Caco-2 (cell line): ENCODE measurements at regions of chr7 and their contacts with region 1.

Region 1: GRCh38 chr7:158407581-158408317 is 179.9 kb downstream of the PTPRN2 start:
- DNase-seq: peak in 1 of 2 experiments; percentile 53
- H3K4me3 ChIP-seq: no peak overlapping the region
- H3K4me3 Mint-ChIP-seq: no peak overlapping the region
- H3K27ac Mint-ChIP-seq: peak overlapping the region; percentile 66
- H3K4me1 ChIP-seq: no peaks in the 10 kb centered on the region
- H3K4me1 Mint-ChIP-seq: peaks cover 12% of the 10 kb centered on the region
- H3K27me3 ChIP-seq: no peaks in the 10 kb centered on the region
- H3K27me3 Mint-ChIP-seq: no peaks in the 10 kb centered on the region
- CTCF ChIP-seq: peak; percentile 51 to 63

Region 2: GRCh38 chr7:157432957-157433576 is 974.7 kb before region 1 on chr7:
- CTCF ChIA-PET with region 1: no interaction called
- POLR2A ChIA-PET with region 1: no interaction called
- intact Hi-C with region 1: loop called (anchors 1 kb)
- DNase-seq: peak; percentile 35 to 44
- H3K4me3 ChIP-seq: no peak overlapping the region
- H3K4me3 Mint-ChIP-seq: peak overlapping the region; percentile 50
- H3K27ac Mint-ChIP-seq: no peak overlapping the region
- H3K4me1 ChIP-seq: no peaks in the 10 kb centered on the region
- H3K4me1 Mint-ChIP-seq: peaks cover 14% of the 10 kb centered on the region
- H3K27me3 ChIP-seq: no peaks in the 10 kb centered on the region
- H3K27me3 Mint-ChIP-seq: no peaks in the 10 kb centered on the region
- CTCF ChIP-seq: peak; percentile 53 to 72

Region 3: GRCh38 chr7:158377800-158378623 is 29.7 kb before region 1 on chr7:
- CTCF ChIA-PET with region 1: no interaction called
- POLR2A ChIA-PET with region 1: no interaction called
- intact Hi-C with region 1: no loop called
- DNase-seq: no peak
- H3K4me3 ChIP-seq: no peak overlapping the region
- H3K4me3 Mint-ChIP-seq: no peak overlapping the region
- H3K27ac Mint-ChIP-seq: no peak overlapping the region
- H3K4me1 ChIP-seq: no peaks in the 10 kb centered on the region
- H3K4me1 Mint-ChIP-seq: no peaks in the 10 kb centered on the region
- H3K27me3 ChIP-seq: no peaks in the 10 kb centered on the region
- H3K27me3 Mint-ChIP-seq: no peaks in the 10 kb centered on the region
- CTCF ChIP-seq: no peak

Region 4: GRCh38 chr7:158422887-158423560 is 15.3 kb after region 1 on chr7:
- CTCF ChIA-PET with region 1: no interaction called
- POLR2A ChIA-PET with region 1: no interaction called
- intact Hi-C with region 1: no loop called
- DNase-seq: peak in 1 of 2 experiments; percentile 22
- H3K4me3 ChIP-seq: no peak overlapping the region
- H3K4me3 Mint-ChIP-seq: no peak overlapping the region
- H3K27ac Mint-ChIP-seq: no peak overlapping the region
- H3K4me1 ChIP-seq: no peaks in the 10 kb centered on the region
- H3K4me1 Mint-ChIP-seq: no peaks in the 10 kb centered on the region
- H3K27me3 ChIP-seq: no peaks in the 10 kb centered on the region
- H3K27me3 Mint-ChIP-seq: no peaks in the 10 kb centered on the region
- CTCF ChIP-seq: no peak

Region 5: DNA sequence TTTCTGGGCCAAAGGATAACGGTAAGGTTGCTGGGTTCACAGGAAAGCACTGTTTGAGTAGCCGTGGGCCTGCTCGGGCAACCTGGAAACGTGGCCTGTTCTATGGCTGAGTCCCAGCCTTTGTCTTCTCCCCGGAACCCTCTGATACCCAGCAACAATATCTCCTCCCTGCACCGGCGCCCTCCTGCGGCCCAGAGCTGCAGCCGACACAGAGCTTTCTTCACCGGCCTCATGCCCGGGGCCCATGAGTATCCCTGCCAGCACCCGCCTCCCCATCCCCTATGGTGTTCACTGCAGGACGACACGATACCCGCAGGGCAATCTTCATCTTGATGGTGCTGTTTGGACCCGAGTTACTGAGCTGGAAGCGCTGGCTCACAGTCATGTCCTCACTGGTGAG is 335.5 kb after region 1 on chr7:
- CTCF ChIA-PET with region 1: no interaction called
- POLR2A ChIA-PET with region 1: no interaction called
- intact Hi-C with region 1: no loop called
- DNase-seq: no peak
- H3K4me3 ChIP-seq: no peak overlapping the region
- H3K4me3 Mint-ChIP-seq: no peak overlapping the region
- H3K27ac Mint-ChIP-seq: no peak overlapping the region
- H3K4me1 ChIP-seq: no peaks in the 10 kb centered on the region
- H3K4me1 Mint-ChIP-seq: peaks cover 7% of the 10 kb centered on the region
- H3K27me3 ChIP-seq: no peaks in the 10 kb centered on the region
- H3K27me3 Mint-ChIP-seq: no peaks in the 10 kb centered on the region
- CTCF ChIP-seq: no peak